ENCODE measurements at regions of chr14 and their contacts with region 1.

Region 1: GRCh38 chr14:89237921-89238529 is 179.0 kb downstream of the FOXN3 start:
- DNase-seq: no peak
- ATAC-seq: peak; percentile 52 to 83 (median 70)
- H3K4me3 ChIP-seq: no peak overlapping the region
- H3K27ac ChIP-seq: no peak overlapping the region
- H3K4me1 ChIP-seq: no peaks in the 10 kb centered on the region
- H3K27me3 ChIP-seq: no peaks in the 10 kb centered on the region
- CTCF ChIP-seq: peak; percentile 50

Region 2: GRCh38 chr14:89027097-89027740 is 210.8 kb before region 1 on chr14:
- intact Hi-C with region 1: loop called in 1 of 2 experiments (anchors 5 kb)
- DNase-seq: peak; percentile 65 to 72
- ATAC-seq: peak; percentile 88 to 97 (median 92)
- H3K4me3 ChIP-seq: peak overlapping the region; percentile 70
- H3K27ac ChIP-seq: no peak overlapping the region
- H3K4me1 ChIP-seq: no peaks in the 10 kb centered on the region
- H3K27me3 ChIP-seq: peaks cover 0 to 55% (median 3%) of the 10 kb centered on the region in 3 donors
- CTCF ChIP-seq: peak; percentile 75

Region 3: DNA sequence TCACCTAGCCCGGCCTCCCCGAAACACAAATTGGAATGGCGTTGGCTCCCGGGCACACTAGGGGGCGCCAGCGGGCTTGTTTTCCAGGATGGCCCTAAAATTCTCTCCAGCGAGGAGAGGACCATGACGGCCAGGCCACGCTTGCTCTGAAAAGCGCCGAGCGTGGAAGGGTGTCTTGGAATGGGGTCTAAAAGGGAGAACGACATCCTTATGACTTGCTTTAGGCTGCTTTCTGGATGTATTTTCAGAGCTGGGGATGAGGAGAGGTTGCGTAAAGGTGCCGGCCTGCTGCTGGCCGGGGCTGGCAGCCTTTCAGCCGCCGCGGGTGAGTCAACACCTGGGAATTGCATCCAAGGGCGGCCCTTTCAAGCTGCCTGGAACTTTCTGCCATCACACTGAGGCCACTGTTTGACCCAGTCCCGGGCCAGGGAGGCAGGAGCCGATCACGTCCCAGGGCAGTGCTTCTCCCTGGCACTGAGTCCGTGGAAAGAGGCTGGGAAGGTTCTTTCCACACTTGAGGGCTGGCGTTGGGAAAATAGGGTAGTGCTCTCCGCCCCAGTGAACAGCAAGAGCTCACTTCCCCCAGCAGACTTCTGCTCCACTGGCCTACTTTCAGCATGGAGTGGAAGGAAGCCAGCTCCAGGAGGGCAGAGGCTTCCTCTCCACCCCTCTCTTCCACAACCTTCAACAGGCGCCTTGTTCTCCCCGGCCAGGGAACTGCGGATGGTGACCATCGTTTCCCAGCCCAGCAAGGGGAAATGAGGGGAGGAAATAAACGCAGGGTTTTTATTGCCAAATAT is 197.4 kb before region 1 on chr14:
- intact Hi-C with region 1: loop called in 1 of 2 experiments (anchors 5 kb)
- DNase-seq: peak; percentile 91 to 94
- ATAC-seq: peak; percentile 98 to 99 (median 98)
- H3K4me3 ChIP-seq: peak overlapping the region; percentile 62
- H3K27ac ChIP-seq: peak overlapping the region; percentile 87
- H3K4me1 ChIP-seq: peaks cover 10% of the 10 kb centered on the region
- H3K27me3 ChIP-seq: no peaks in the 10 kb centered on the region
- CTCF ChIP-seq: peak; percentile 93

Region 4: GRCh38 chr14:89175881-89176799 is 61.9 kb before region 1 on chr14:
- intact Hi-C with region 1: loop called (anchors 2 to 5 kb)
- DNase-seq: no peak
- ATAC-seq: no peak
- H3K4me3 ChIP-seq: no peak overlapping the region
- H3K27ac ChIP-seq: no peak overlapping the region
- H3K4me1 ChIP-seq: peaks cover 34% of the 10 kb centered on the region
- H3K27me3 ChIP-seq: no peaks in the 10 kb centered on the region
- CTCF ChIP-seq: no peak